Activated CD8-positive, alpha-beta T cell treated with anti-CD3 and anti-CD28 coated beads, Interleukin-2, amount 10 ng/mL, durations not matched to agents 7 days and 5 days (primary cell): ENCODE measurements at regions of chr11 and their contacts with region 1.

Region 1: GRCh38 chr11:133927690-133928627 is 28.8 kb downstream of the IGSF9B start:
- DNase-seq: peak; percentile 77
- ATAC-seq: peak; percentile 84
- H3K4me3 Mint-ChIP-seq: peak overlapping the region; percentile 61
- H3K27ac Mint-ChIP-seq: peak overlapping the region; percentile 87
- H3K4me1 Mint-ChIP-seq: peaks cover 35% of the 10 kb centered on the region
- H3K27me3 Mint-ChIP-seq: no peaks in the 10 kb centered on the region

Region 2: DNA sequence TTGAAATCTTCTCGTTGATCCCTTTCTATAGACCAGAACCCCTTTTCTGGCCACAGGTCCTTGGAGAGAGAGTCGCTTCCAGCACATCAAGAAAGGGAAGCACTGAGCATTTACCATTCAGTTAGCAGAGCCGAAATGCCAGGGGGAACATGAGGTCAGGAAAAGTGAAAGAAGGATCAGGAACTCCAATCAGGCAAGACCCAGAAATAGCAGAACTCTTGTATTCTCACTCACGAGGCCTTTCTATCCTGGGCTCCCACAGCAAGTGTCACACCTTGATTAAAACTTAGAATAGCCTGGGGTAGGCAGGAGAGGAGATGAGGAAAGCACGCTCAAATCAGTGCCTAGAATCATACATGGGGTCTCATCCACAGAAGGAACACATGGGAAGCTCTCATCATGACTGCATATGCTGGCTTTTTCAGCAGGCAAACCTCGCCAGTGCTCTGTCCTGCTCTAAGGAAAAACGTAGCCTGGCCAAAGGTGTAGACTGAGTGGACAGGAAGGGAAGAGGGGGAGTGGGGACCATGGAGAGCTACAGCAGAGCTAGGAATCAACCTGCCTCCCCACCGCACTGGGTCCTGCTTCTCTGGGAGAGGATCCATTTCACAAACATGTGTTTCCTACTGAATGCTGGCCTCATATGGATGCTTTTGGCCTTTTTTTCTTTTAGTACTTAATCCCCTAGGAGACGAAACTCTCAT is 436.1 kb before region 1 on chr11:
- CTCF ChIA-PET with region 1: no interaction called
- POLR2A ChIA-PET with region 1: no interaction called
- DNase-seq: no peak
- ATAC-seq: no peak
- H3K4me3 Mint-ChIP-seq: no peak overlapping the region
- H3K27ac Mint-ChIP-seq: no peak overlapping the region
- H3K4me1 Mint-ChIP-seq: no peaks in the 10 kb centered on the region
- H3K27me3 Mint-ChIP-seq: no peaks in the 10 kb centered on the region

Region 3: GRCh38 chr11:133947321-133947756 is 19.4 kb after region 1 on chr11:
- CTCF ChIA-PET with region 1: interaction called, 36 read pairs
- POLR2A ChIA-PET with region 1: interaction called, 6 read pairs
- DNase-seq: peak; percentile 83
- ATAC-seq: peak; percentile 48
- H3K4me3 Mint-ChIP-seq: peak overlapping the region; percentile 82
- H3K27ac Mint-ChIP-seq: peak overlapping the region; percentile 96
- H3K4me1 Mint-ChIP-seq: peaks cover 96% of the 10 kb centered on the region
- H3K27me3 Mint-ChIP-seq: no peaks in the 10 kb centered on the region

Region 4: GRCh38 chr11:133956650-133957633 is 29.0 kb after region 1 on chr11 and contains the start of gene IGSF9B:
- CTCF ChIA-PET with region 1: interaction called, 18 read pairs
- POLR2A ChIA-PET with region 1: no interaction called
- DNase-seq: peak; percentile 93
- ATAC-seq: peak; percentile 97
- H3K4me3 Mint-ChIP-seq: peak within 1 kb of the TSS; percentile 91
- H3K27ac Mint-ChIP-seq: peak within 1 kb of the TSS; percentile 92
- H3K4me1 Mint-ChIP-seq: peaks cover 44% of the 10 kb centered on the region
- H3K27me3 Mint-ChIP-seq: peaks cover 16% of the 10 kb centered on the region
- total RNA-seq, gene IGSF9B: 96.3 to 118 TPM

Region 5: DNA sequence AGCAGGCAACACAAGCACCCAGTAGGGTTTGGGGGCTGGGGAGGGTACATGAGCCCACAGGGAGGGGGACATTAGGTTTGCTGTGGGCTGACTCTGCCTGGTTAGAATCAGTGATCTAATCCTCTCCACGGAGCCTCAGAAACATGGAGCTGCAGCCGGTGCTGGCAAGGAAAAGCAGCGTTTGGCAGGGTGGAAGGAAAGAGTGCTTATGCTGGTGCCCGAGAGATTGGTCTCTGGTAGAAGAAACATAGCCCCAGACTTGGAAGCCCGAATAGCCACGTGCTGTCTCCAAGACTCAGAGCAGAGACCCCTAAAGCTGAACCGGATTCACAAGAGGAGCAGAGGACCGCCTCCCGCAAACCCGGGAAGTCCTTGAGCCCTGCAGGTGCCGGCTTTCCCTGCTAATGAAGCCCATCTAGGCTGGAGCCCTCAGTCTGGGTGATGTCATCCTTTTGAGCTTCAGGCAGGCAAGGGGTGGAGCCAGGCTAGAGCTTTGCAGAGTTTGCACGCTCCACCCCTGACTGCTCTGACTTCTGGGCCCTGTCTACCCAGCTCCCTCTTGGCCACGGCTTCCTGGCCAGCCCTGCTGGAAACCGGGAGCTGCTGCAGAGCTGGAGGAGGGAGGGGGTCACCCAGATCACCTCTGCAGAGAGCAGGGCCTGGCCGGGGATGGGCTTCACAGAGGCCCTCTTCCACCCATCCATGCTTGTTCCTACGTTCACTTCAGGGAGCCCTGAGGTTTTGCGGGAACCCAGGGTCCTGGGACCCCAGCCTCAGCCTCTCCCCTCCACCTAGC is 105.9 kb after region 1 on chr11:
- CTCF ChIA-PET with region 1: interaction called, 23 read pairs
- POLR2A ChIA-PET with region 1: interaction called, 3 read pairs
- DNase-seq: peak; percentile 90
- ATAC-seq: peak; percentile 88
- H3K4me3 Mint-ChIP-seq: peak overlapping the region; percentile 56
- H3K27ac Mint-ChIP-seq: peak overlapping the region; percentile 85
- H3K4me1 Mint-ChIP-seq: peaks cover 73% of the 10 kb centered on the region
- H3K27me3 Mint-ChIP-seq: no peaks in the 10 kb centered on the region

Region 6: DNA sequence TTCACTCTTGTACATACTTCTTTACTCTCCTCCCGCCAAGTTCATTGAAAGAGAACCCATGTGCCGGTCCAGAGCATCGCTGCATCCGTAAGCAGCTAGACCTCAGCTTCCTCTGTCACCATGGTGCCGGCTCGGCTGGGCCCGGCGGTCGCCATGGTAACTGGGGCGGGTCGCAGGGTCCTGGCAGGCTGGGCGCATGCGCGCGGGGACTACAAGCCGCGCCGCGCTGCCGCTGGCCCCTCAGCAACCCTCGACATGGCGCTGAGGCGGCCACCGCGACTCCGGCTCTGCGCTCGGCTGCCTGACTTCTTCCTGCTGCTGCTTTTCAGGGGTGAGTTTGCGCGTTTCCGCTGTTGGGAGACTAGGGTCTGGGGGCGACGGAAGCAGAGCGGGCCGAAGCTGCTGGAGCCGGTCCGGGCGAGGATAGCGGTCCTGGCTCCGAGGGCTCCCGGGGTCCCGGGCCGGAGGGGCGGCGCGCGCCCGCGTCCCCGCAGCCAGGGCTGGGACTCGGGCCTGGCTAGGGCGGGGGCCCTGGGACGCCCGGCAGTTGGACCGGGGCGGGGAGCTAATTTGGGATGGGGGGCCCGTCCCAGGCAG is 141.0 kb after region 1 on chr11 and contains the start of gene JAM3:
- CTCF ChIA-PET with region 1: interaction called, 12 read pairs
- POLR2A ChIA-PET with region 1: no interaction called
- DNase-seq: peak; percentile 98
- ATAC-seq: peak; percentile 94
- H3K4me3 Mint-ChIP-seq: peak within 1 kb of the TSS; percentile 91
- H3K27ac Mint-ChIP-seq: peak within 1 kb of the TSS; percentile 84
- H3K4me1 Mint-ChIP-seq: peaks cover 15% of the 10 kb centered on the region
- H3K27me3 Mint-ChIP-seq: peaks cover 60% of the 10 kb centered on the region
- total RNA-seq, gene JAM3: 8.0 to 9.6 TPM

Region 7: DNA sequence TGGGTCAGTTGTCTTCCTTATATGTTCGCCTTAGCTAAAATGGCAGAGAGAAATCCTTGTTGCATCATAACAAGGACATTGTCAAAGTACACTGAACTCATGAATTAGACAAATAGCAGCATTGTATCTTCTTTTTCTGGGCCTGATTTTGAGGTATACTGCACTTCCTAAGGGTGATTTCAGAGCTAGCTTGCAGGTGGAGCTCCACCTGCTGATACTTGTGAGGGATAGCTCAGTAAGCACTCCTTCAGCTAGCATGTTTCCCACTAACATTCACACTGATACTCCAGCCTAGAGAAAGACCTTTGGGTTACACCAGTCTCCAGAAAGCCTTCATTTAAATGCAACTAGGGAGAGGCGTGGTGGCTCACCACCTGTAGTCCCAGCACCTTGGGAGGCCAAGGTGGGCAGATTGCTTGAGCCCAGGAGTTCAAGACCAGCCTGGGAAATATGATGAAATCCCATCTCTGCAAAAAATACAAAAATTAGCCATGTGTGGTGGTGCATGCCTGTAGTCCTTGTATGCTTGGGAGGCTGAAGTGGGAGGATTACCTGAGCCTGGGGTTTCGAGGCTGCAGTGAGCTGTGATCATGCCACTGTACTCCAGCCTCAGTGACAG is 170.7 kb after region 1 on chr11:
- CTCF ChIA-PET with region 1: interaction called, 14 read pairs
- POLR2A ChIA-PET with region 1: no interaction called
- DNase-seq: no peak
- ATAC-seq: peak; percentile 76
- H3K4me3 Mint-ChIP-seq: no peak overlapping the region
- H3K27ac Mint-ChIP-seq: no peak overlapping the region
- H3K4me1 Mint-ChIP-seq: peaks cover 3% of the 10 kb centered on the region
- H3K27me3 Mint-ChIP-seq: peaks cover 3% of the 10 kb centered on the region

Region 8: DNA sequence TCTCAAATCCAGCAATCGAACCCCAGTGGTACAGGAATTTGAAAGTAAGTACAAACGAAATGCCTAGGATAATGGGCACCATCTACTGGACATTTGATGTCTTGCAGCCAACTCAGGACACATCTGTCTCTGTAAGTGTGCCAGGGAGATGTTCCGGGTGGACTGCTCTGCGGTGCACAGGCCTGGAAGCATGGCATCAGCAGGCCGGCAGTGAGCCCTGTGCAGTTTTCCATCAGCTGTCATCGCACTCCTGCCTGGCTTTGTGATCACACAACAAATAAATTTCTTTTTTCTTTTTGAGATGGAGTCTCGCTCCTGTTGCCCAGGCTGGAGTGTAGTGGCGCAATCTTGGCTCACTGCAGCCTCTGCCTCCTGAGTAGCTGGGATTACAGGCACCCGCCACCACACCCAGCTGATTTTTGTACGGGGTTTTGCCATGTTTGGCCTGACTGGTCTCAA is 211.9 kb after region 1 on chr11:
- CTCF ChIA-PET with region 1: interaction called, 15 read pairs
- POLR2A ChIA-PET with region 1: no interaction called
- DNase-seq: peak; percentile 70
- ATAC-seq: peak; percentile 64
- H3K4me3 Mint-ChIP-seq: no peak overlapping the region
- H3K27ac Mint-ChIP-seq: no peak overlapping the region
- H3K4me1 Mint-ChIP-seq: peaks cover 18% of the 10 kb centered on the region
- H3K27me3 Mint-ChIP-seq: no peaks in the 10 kb centered on the region